ENCODE measurements at regions of chr11 and their contacts with region 1.

Region 1: DNA sequence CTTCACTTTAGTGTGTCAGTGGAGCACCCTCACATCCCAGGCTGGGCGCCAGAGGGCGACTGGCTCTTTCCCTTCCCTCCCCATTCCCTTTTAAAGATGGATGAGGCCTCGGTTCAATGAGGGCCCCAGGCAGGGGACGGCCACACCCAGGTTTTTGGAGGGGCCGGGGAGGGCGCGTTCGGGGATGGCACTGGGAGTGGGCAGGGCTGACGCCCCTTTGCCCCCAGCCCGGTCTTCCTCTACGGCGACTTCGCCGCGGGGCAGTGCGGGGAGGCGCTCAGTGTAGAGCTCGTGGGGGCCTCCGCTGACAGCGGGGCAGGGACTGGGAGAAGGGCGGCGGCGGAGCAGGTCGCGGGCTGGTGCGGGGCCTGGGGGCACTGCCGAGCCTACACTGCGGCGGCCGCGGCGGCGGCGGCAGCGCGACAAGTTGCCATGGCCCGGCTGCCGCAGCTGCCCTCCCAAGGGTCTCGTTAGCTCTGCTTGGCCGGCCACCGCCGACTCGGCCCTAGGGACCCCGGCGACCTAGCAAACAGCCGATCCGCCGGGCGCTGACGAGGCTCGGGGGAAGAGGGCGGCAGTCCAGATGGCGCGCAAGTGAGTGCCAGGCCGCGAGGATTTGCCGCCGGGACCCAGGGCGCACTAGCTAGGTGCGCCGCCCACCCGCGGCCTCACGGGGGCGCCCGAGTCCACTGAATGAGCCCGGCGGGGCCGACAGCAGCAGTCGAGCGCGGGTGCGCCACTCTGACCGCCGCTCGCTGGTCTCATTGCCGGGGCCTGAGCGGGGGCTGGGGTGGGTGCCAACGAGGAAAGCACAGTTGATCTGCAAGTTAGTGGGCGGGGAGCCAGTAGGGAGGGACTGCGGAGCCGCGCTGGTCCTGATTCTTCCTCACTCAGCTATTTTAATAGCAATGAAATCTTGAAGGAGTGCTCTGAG is 92.7 kb downstream of the RRM1 start:
- DNase-seq: peak; percentile 63
- H3K4me3 ChIP-seq: peak overlapping the region; percentile 46 to 73 (median 60)
- H3K27ac ChIP-seq: no peak overlapping the region
- H3K4me1 ChIP-seq: no peaks in the 10 kb centered on the region
- H3K27me3 ChIP-seq: no peaks in the 10 kb centered on the region
- CTCF ChIP-seq: peak; percentile 61 to 90

Region 2: GRCh38 chr11:3609416-3610265 is 577.7 kb before region 1 on chr11:
- CTCF ChIA-PET with region 1: no interaction called
- dilution Hi-C with region 1: no loop called
- in situ Hi-C with region 1: no loop called
- intact Hi-C with region 1: no loop called
- DNase-seq: peak; percentile 23
- H3K4me3 ChIP-seq: no peak overlapping the region
- H3K27ac ChIP-seq: no peak overlapping the region
- H3K4me1 ChIP-seq: no peaks in the 10 kb centered on the region
- H3K27me3 ChIP-seq: no peaks in the 10 kb centered on the region
- CTCF ChIP-seq: peak; percentile 84 to 92

Region 3: GRCh38 chr11:4493480-4493818 is 306.1 kb after region 1 on chr11:
- CTCF ChIA-PET with region 1: interaction called, 3 read pairs
- dilution Hi-C with region 1: no loop called
- in situ Hi-C with region 1: loop called in 1 of 2 experiments (anchors 5 kb)
- intact Hi-C with region 1: loop called (anchors 1 kb)
- DNase-seq: no peak
- H3K4me3 ChIP-seq: no peak overlapping the region
- H3K27ac ChIP-seq: no peak overlapping the region
- H3K4me1 ChIP-seq: no peaks in the 10 kb centered on the region
- H3K27me3 ChIP-seq: no peaks in the 10 kb centered on the region
- CTCF ChIP-seq: peak in 1 of 2 donors; percentile 1

Region 4: GRCh38 chr11:4551346-4551979 is 364.1 kb after region 1 on chr11:
- CTCF ChIA-PET with region 1: interaction called, 18 read pairs
- dilution Hi-C with region 1: no loop called
- in situ Hi-C with region 1: loop called in 1 of 2 experiments (anchors 10 kb)
- intact Hi-C with region 1: loop called (anchors 1 kb)
- DNase-seq: no peak
- H3K4me3 ChIP-seq: no peak overlapping the region
- H3K27ac ChIP-seq: no peak overlapping the region
- H3K4me1 ChIP-seq: no peaks in the 10 kb centered on the region
- H3K27me3 ChIP-seq: no peaks in the 10 kb centered on the region
- CTCF ChIP-seq: peak; percentile 30 to 47

Region 5: GRCh38 chr11:4826425-4826824 is 639.1 kb after region 1 on chr11:
- CTCF ChIA-PET with region 1: interaction called, 4 read pairs
- dilution Hi-C with region 1: no loop called
- in situ Hi-C with region 1: no loop called
- intact Hi-C with region 1: loop called (anchors 1 kb)
- DNase-seq: no peak
- H3K4me3 ChIP-seq: no peak overlapping the region
- H3K27ac ChIP-seq: no peak overlapping the region
- H3K4me1 ChIP-seq: no peaks in the 10 kb centered on the region
- H3K27me3 ChIP-seq: no peaks in the 10 kb centered on the region
- CTCF ChIP-seq: peak in 1 of 2 donors; percentile 60

Region 6: DNA sequence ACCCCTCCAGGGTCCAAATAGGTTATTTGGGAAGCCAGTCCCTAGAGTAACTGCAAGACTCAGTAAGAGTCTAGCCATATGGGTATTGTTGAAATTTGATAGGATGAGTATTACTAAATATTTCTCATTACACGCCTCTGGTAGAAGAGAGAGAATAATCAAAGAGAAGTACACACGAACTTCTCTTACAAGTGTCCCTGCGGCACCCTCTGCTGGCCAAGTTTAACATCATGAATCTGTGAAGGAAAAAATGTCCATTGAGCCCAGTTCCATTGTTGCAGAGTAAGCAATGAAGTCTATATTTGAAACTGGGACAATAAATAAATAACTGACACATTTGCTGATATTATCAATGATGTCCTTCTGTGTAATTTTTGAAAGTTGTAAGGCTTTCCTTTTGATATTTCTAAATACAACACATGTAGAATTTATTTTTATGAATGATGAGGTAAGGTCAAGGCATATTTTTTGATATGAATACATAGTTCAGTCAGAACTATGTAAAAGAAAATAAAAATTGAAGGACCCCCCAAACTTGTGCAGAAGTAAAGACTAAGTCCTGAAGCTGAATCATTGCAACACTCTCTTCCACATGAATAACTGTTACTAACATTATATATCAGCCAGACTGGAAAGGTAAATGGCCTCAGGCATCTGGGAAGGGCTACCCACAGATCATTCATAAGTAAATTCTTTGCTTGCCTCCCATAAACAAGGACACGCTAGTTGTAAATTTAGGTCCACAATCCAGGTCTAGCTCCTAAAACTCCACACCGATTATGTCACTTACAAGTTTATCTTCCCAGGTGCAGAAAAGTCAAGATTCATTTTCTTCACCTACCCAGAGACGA is 817.3 kb after region 1 on chr11:
- CTCF ChIA-PET with region 1: interaction called, 3 read pairs
- dilution Hi-C with region 1: no loop called
- in situ Hi-C with region 1: loop called in 1 of 2 experiments (anchors 25 kb)
- intact Hi-C with region 1: loop called (anchors 1 kb)
- DNase-seq: peak; percentile 63
- H3K4me3 ChIP-seq: no peak overlapping the region
- H3K27ac ChIP-seq: peak overlapping the region; percentile 42
- H3K4me1 ChIP-seq: peaks cover 6% of the 10 kb centered on the region
- H3K27me3 ChIP-seq: no peaks in the 10 kb centered on the region
- CTCF ChIP-seq: peak; percentile 57 to 73